Common myeloid progenitor, CD34-positive (primary cell): ENCODE measurements at regions of chr9 and their contacts with region 1.

Region 1: DNA sequence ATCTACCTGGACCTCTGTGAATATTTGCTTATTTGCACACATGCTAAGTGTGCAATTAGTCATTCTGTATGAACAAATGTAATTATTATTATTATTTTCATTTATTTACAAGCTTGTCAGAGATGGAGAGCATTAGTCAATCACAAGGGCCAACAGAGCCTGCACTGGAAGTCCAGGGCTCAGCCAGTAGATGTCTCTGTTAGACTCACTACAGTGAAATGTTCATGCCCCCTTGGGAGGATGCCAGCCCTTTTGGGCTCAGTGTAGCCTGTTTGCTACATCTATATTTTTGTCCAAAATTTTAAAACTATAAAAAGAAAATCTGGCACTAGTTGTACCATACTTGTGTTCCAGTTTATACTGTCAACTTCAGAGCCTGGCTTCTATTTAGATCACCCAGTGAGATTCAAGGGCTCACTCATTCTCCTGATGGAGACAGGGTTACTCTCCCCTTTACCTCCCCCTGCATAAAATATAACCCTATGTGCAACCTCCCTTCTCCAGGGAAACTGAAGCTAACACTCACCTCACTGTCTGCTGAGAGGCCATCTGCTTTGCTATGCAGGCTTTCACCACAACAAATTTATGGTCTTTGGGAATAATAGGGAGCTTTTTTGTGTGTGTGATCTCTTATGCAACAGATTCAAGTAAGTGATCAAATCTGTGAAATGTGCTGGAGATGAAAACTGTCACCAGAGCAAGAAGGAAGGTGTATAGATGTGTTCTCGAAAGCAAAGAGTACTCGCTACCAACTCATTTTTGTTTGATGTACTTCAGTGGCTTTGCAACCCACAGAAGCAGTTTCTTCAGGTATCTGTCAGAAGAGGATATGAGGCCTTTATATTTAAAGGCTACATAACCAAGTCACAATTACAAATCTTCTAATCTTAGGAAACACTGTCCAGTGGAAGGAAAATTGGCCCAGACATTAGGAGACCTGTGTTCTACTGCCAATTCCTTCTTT is 99.9 kb upstream of the TLE4 start:
- DNase-seq: peak; percentile 39 to 66 (median 61)
- H3K4me3 ChIP-seq: no peak overlapping the region
- H3K27ac ChIP-seq: no peak overlapping the region
- H3K4me1 ChIP-seq: peaks cover 0 to 7% (median 3%) of the 10 kb centered on the region in 4 experiments
- H3K27me3 ChIP-seq: no peaks in the 10 kb centered on the region

Region 2: GRCh38 chr9:79447762-79448161 is 24.1 kb before region 1 on chr9:
- CTCF ChIA-PET with region 1: no interaction called
- POLR2A ChIA-PET with region 1: no interaction called
- DNase-seq: no peak
- H3K4me3 ChIP-seq: no peak overlapping the region
- H3K27ac ChIP-seq: no peak overlapping the region
- H3K4me1 ChIP-seq: no peaks in the 10 kb centered on the region
- H3K27me3 ChIP-seq: no peaks in the 10 kb centered on the region

Region 3: DNA sequence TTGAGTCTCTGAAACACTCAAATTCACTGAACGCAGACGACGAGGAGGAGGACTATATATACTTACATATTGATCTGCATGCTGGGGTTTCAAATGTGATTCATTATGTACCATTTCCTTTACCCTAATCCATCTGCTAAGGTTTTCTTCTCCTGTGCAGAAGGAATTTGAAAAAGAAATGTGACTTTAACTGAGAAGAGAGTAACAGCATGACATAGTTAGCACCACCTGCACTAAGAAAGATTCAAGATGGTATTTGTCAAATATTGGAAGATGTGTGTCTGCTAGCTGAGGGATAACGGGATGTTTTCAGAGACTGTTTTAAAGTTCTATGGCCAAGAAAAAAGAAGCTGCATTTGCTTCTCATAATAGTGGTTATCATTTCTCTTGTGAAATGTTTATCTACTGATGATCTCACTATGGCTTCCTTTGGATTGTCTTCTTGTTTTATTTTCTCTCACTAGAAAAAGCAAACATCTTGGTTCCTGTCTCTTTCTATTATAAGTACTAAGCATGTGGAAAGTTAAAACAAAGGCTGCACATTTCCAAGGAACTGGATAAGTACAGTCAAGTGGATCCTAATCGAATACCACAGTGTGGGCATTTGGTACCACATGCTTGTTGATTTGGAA is 10.1 kb after region 1 on chr9:
- CTCF ChIA-PET with region 1: interaction called, 12 read pairs
- POLR2A ChIA-PET with region 1: no interaction called
- DNase-seq: no peak
- H3K4me3 ChIP-seq: no peak overlapping the region
- H3K27ac ChIP-seq: no peak overlapping the region
- H3K4me1 ChIP-seq: no peaks in the 10 kb centered on the region
- H3K27me3 ChIP-seq: no peaks in the 10 kb centered on the region